ENCODE measurements at regions of chr11 and their contacts with region 1.

Region 1: DNA sequence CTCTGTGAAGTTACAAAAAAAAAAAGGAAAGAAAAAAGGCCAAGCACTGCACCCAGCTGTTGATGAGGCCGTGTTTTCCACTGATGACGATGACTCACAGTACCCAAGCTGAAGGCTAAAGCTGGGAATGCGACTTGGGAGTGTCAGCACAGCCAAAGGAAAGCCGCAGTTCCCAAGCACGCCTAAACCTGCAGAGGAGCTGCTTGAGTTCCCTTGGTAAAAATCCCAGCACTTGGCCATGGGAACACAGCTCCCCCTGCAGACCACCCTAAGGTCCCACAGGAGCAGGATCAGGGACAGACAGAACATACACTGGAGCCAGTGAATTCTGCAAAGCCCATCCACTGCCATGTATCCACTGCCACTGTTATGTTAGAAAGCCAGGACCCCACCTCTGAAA is 39.9 kb downstream of the SERGEF start:
- DNase-seq: peak; percentile 83
- H3K4me3 ChIP-seq: no peak overlapping the region
- H3K27ac ChIP-seq: no peak overlapping the region
- H3K27me3 ChIP-seq: no peaks in the 10 kb centered on the region
- CTCF ChIP-seq: peak; percentile 97

Region 2: DNA sequence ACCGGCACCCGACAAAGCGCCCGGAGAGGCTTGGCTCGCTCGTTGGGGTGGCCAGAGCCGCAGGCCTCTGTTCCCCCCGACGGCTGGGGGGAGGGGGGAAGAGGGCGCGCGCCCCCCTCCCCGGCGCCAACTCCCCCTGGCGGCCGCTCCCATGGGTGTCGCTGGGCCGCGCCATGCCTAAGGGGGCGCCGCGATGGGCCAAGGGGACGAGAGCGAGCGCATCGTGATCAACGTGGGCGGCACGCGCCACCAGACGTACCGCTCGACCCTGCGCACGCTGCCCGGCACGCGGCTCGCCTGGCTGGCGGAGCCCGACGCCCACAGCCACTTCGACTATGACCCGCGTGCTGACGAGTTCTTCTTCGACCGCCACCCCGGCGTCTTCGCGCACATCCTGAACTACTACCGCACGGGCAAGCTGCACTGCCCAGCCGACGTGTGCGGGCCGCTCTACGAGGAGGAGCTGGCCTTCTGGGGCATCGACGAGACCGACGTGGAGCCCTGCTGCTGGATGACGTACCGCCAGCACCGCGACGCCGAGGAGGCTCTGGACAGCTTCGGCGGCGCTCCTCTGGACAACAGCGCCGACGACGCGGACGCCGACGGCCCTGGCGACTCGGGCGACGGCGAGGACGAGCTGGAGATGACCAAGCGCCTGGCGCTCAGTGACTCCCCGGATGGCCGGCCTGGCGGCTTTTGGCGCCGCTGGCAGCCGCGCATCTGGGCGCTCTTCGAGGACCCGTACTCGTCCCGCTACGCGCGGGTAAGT is 237.0 kb before region 1 on chr11:
- CTCF ChIA-PET with region 1: interaction called, 678 read pairs
- POLR2A ChIA-PET with region 1: interaction called, 4 read pairs
- DNase-seq: no peak
- H3K4me3 ChIP-seq: no peak overlapping the region
- H3K27ac ChIP-seq: no peak overlapping the region
- H3K27me3 ChIP-seq: peaks cover 60% of the 10 kb centered on the region
- CTCF ChIP-seq: peak; percentile 20; the same call in 1 of the 2 replicates

Region 3: GRCh38 chr11:17770048-17770652 is 202.8 kb before region 1 on chr11:
- CTCF ChIA-PET with region 1: interaction called, 38 read pairs
- POLR2A ChIA-PET with region 1: no interaction called
- DNase-seq: no peak
- H3K4me3 ChIP-seq: no peak overlapping the region
- H3K27ac ChIP-seq: no peak overlapping the region
- H3K27me3 ChIP-seq: peaks cover 6% of the 10 kb centered on the region
- CTCF ChIP-seq: no peak

Region 4: DNA sequence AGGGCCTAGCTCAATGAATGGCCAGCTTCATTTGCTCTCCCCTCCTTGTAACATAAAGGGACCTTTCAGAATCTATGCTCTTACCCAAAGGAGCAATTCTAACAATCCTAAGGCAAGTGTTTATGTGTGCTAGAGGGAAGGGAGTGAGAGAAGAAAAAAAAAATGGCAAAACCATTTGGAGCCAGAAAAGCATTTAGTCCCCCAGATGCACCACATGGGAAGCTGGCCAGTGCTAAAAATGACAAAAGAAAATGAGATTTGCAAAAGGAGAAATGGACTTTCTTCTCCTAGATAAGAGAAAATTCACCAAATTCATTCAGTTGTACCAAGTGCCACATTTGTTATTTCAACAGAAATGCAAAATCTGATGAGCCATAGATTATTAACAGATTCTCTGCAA is 12.9 kb before region 1 on chr11:
- CTCF ChIA-PET with region 1: interaction called, 59 read pairs
- POLR2A ChIA-PET with region 1: interaction called, 3 read pairs
- DNase-seq: no peak
- H3K4me3 ChIP-seq: no peak overlapping the region
- H3K27ac ChIP-seq: no peak overlapping the region
- H3K27me3 ChIP-seq: no peaks in the 10 kb centered on the region
- CTCF ChIP-seq: no peak

Region 5: GRCh38 chr11:17991783-17992433 is 18.9 kb after region 1 on chr11:
- CTCF ChIA-PET with region 1: interaction called, 111 read pairs
- POLR2A ChIA-PET with region 1: no interaction called
- DNase-seq: peak; percentile 36
- H3K4me3 ChIP-seq: no peak overlapping the region
- H3K27ac ChIP-seq: no peak overlapping the region
- H3K27me3 ChIP-seq: no peaks in the 10 kb centered on the region
- CTCF ChIP-seq: peak; percentile 92

Region 6: DNA sequence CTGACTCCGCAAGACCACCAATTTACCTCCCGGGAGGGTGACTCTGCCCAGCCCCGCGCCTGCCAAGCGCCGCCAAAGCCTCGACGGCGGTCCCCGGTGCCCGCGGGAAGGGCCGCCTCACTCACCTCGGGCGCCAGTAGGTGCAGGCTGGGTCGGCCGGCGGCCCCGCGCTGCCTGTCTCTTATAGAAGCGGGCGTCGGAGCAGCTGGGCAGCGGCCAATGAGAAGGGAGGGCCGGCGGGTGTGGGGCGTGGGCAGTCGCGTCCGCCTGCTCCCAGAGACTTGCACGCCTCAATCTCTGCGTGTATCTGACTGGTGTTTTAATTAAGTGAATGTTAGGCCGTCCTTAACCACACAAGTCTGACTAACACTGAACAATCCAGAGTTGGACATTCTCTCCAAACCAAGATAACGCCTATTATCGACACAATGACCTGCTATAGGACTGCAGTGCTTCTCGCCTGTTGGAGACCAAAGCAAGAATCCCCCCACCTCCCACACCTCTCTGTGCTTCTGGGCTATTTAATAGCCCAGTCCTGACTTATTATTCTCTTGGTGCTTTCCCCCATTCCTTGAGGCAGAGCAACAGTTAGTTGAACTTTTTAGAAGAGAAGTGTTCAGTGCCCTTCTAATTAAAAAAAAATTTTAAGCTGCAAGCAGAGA is 73.3 kb after region 1 on chr11 and contains the start of gene TPH1:
- CTCF ChIA-PET with region 1: no interaction called
- POLR2A ChIA-PET with region 1: no interaction called
- DNase-seq: no peak
- H3K4me3 ChIP-seq: no peak within 1 kb of the TSS
- H3K27ac ChIP-seq: no peak within 1 kb of the TSS
- H3K27me3 ChIP-seq: peaks cover 21% of the 10 kb centered on the region
- CTCF ChIP-seq: no peak
- polyA plus RNA-seq, gene TPH1: 0.04 and 0.06 TPM in 2 replicates